ENCODE measurements at regions of chr14 and their contacts with region 1.

Region 1: DNA sequence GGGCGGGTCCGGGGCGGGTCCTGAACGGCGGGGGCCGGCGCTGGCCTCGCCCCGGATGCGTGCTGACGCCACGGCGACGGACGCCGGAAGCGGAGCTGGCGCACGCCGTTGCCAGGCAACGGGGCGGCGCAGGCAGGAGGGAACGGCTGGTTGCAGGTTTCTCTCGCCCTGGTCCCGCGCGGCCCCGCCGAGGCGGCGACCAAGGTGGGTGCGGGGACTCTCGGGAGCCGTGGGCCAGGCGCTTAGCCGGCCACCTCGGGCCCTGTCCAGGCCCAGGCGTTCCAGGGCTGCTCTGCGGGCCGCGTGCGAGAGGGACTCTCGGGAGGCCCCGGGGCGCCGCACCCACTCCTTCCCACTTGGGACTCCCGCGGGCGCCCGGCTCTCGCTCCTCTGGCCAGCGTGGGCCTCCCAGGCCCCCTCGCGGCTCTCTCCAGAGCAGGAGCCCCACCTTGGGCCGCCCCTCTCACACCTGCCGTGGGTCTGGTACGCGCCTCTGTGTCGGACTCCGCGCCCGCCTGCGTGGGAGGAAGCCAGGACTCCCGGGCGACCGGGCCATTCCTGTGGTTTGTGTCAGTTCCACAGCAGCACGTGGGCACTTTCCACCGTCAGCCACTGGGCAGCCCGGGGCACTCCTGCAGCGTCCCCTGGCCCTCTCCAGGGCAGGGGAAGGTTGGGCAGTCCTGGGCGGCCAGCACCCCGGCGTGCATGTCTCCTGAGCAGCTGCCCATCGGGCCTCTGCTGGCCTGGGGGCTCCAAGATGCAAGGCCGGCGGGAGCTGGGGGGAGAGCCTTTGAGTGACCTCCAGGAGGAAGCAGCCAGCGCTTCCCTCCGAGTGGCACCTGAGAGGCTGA is at the start of gene CLBA1:
- DNase-seq: peak; percentile 94
- H3K4me3 ChIP-seq: peak within 1 kb of the TSS; percentile 63 to 92 (median 81)
- H3K27ac ChIP-seq: peak within 1 kb of the TSS; percentile 71 to 85 (median 78)
- H3K4me1 ChIP-seq: peaks cover 0 to 13% (median 12%) of the 10 kb centered on the region in 4 donors
- H3K27me3 ChIP-seq: no peaks in the 10 kb centered on the region
- CTCF ChIP-seq: no peak
- EP300 ChIP-seq: no peak
- POLR2A ChIP-seq: no peak
- total RNA-seq, gene CLBA1: 3.2 to 5.1 (median 3.6) TPM

Region 2: DNA sequence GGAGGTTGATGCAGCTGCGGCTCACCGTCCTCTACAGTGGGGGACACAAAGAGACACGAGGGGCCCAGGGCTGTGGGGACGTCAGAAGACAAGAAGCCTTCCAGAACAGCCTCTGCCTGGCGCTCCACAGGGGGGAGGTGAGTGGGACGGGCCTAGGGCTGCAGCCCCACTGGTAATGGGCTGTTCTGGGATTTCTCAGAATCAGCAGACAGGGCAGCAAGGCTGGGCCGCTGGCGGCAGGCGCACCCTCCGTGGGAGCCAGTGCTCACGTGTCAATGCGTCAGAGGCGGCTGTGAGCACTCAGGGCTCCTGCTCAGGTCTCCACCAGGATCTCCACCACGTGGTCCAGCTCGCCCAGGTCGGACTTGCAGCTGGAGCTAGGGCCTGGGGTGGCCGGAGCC is 25.0 kb after region 1 on chr14:
- intact Hi-C with region 1: loop called (anchors 2 kb)
- DNase-seq: peak; percentile 94
- H3K4me3 ChIP-seq: no peak overlapping the region
- H3K27ac ChIP-seq: peak overlapping the region in 3 of 4 donors; percentile 68 to 82 (median 77)
- H3K4me1 ChIP-seq: peaks cover 0 to 35% (median 30%) of the 10 kb centered on the region in 4 donors
- H3K27me3 ChIP-seq: no peaks in the 10 kb centered on the region
- CTCF ChIP-seq: no peak
- EP300 ChIP-seq: peak in 3 of 4 donors; percentile 51 to 87 (median 53)
- POLR2A ChIP-seq: no peak